Right ventricle myocardium inferior (tissue), 1 donor: ENCODE measurements at regions of chr3 and their contacts with region 1.

Region 1: DNA sequence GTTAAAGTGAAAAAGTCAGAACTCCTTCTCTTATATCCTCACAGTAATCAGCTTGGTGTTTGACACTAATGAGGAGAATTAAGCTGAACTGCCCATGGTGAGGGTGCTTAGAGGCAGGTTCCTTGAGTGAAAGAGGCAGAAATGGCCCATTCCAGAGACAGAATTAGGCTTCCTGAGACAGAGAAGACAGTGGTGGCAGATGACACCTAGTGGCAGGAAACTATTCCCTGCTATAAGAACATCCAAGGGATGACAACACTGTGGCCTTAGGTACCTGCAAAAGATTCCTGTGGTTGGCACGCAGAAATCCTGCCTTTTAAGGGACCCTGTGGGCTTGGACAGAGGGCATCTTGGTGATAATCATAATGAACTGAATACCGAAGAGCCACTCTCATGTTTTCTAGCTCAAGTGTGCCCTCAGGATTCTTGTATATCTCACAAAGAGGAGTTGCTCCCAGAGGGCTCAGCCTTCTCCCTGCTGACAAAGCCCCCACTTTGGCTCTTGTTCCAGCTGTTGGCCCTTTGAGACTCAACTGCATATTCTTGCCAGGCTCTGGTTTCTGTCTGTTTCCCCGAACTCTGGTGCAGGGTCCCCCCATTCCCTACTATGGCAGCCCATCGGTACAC is 56.0 kb downstream of the KBTBD12 start:
- DNase-seq: no peak
- ATAC-seq: peak; percentile 75

Region 2: DNA sequence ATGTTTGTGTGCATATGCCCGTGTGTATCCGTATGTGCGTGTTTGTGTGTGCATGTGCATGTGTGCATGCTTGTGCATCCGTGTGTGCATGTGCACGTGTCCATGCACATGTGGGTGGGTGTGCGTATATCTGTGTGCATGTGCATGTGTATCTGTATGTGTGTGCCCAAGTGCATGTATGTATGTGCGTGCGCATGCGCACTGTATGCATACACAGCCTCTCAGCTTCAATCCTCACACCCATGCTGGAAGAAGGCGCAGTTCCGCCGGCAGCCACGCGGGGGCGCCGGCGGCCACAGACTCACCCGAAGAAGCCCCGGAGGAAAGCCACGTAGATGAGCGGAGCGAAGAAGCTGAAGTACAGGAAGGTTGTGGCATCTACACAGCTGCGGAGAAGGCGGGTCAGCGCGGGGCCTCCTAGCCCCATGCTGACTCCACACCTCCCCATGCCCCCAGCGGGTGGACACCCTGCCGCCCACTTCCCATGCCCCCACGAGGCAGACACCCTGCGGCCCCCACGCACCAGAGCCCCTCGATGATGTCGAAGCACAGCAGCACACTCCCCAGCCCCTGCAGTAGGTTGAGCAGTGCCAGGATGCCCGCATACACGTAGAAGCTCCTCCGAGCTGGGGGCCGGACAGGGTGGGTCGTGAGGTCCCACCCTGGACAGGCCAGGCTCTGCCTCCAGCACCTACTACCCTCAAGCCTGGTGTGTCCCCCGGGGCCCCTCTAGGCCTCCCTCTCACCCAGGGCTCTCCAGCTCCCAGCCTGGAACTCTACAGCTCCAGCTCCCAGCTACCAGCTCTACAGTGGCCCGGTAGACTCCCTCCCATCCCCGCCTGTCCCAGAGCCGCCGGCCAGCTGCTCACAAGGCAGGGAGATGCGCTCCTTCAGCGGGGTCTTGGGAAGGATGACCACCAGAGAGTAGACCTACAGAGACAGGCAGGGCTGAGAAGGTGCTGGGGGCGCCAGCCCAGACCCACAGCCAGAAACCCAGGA is 395.9 kb before region 1 on chr3:
- intact Hi-C with region 1: loop called (anchors 5 kb)
- DNase-seq: peak; percentile 93
- ATAC-seq: peak; percentile 79

Region 3: DNA sequence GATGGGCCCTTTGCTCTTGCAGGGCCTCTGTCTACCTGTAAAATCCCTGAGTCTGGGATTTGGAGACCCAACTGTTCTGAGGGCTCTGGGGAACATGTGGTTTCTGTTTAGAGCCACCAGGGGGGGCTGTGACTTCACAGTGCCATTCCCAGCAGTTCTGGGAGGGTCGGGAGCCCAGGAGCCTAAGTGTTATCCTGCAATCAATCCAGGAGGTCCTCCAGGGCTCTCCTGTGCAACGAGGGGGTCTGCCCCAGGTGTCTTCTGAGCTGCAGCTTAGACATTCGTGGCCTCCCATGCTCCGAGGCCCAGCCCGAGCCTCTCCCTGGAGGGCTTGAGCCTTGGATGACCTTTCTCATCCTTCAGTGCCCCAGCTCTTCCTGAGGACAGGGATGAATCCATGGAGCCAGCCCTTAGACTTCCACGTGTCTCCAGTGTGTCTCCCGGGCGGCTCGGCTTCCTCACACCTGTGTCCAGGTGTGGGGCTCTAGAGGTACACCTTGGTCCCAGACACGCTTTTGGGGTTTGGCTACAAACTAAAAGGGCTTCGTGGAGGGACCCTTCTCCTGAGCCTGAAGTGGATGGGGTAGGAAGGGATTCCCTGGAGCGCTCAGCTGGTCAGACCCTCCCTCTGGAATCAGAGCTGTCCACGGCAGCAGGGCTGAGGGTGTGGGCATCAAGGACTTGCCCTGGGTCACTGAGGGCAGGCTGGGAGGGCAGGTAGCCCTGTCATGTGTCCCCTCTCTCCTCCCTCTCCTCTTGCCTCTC is 318.7 kb before region 1 on chr3:
- intact Hi-C with region 1: loop called (anchors 5 kb)
- DNase-seq: no peak
- ATAC-seq: peak; percentile 86

Region 4: GRCh38 chr3:127817396-127817841 is 153.7 kb before region 1 on chr3:
- intact Hi-C with region 1: no loop called
- DNase-seq: no peak
- ATAC-seq: peak; percentile 25